PC-3 (cell line): ENCODE measurements at regions of chr4 and their contacts with region 1.

Region 1: GRCh38 chr4:186936496-186937375 is 213.1 kb upstream of the FAT1 start:
- DNase-seq: peak; percentile 79
- ATAC-seq: peak; percentile 66
- H3K4me3 ChIP-seq: peak overlapping the region; percentile 54
- H3K27ac ChIP-seq: peak overlapping the region; percentile 92
- H3K4me1 ChIP-seq: peaks cover 47% of the 10 kb centered on the region
- H3K27me3 ChIP-seq: no peaks in the 10 kb centered on the region
- CTCF ChIP-seq: peak; percentile 48; the same call in 1 of the 2 replicates

Region 2: GRCh38 chr4:186669159-186669731 is 267.5 kb before region 1 on chr4:
- CTCF ChIA-PET with region 1: no interaction called
- POLR2A ChIA-PET with region 1: no interaction called
- intact Hi-C with region 1: loop called (anchors 10 kb)
- DNase-seq: peak; percentile 59
- ATAC-seq: peak; percentile 64
- H3K4me3 ChIP-seq: no peak overlapping the region
- H3K27ac ChIP-seq: no peak overlapping the region
- H3K4me1 ChIP-seq: peaks cover 16% of the 10 kb centered on the region
- H3K27me3 ChIP-seq: no peaks in the 10 kb centered on the region
- CTCF ChIP-seq: peak; percentile 65

Region 3: DNA sequence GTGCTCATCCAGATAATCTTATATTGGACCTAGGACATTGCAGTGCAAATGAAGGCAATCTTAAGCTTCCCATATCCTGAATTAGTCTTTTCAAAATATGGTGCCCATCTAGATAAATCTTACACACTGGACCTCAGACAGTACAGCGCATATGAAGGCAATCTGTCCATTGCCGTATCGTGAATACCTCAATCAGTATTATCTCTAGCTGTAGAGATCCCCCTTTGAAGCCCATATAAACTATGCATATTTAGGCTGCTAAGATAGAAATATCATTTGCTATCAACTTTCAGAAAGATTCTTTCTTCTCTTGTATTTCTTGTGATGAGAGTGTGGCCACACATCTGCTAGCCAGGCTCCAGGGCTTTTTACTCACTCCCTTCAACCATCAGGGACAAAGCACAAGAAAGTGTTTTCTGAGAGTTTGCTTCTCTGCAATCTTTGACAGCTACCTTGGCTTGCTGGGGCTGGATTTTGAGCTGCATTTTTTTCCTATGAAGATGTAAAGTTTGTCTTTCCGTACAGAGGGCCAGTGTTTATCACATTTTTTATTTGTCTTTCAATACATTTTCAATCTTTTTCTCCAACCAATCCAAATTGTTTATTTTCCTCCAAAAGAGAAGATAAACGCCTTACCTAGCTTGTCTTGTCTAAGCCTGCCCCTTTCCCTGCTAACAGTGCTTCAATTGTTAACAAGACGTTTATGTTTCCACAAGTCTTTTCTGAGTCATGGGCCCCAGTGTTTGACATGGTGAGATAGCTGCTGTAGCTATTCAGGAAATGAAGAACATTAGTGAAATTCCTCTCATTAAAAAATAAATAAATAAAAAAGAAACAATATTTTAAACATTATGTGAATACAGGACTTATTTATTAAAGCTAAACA is 155.5 kb before region 1 on chr4:
- CTCF ChIA-PET with region 1: no interaction called
- POLR2A ChIA-PET with region 1: no interaction called
- intact Hi-C with region 1: loop called (anchors 5 kb)
- DNase-seq: peak; percentile 77
- ATAC-seq: peak; percentile 99
- H3K4me3 ChIP-seq: no peak overlapping the region
- H3K27ac ChIP-seq: peak overlapping the region; percentile 69
- H3K4me1 ChIP-seq: peaks cover 17% of the 10 kb centered on the region
- H3K27me3 ChIP-seq: no peaks in the 10 kb centered on the region
- CTCF ChIP-seq: no peak

Region 4: GRCh38 chr4:186789651-186790050 is 147.1 kb before region 1 on chr4:
- CTCF ChIA-PET with region 1: no interaction called
- POLR2A ChIA-PET with region 1: no interaction called
- intact Hi-C with region 1: loop called (anchors 1 kb)
- DNase-seq: no peak
- ATAC-seq: no peak
- H3K4me3 ChIP-seq: no peak overlapping the region
- H3K27ac ChIP-seq: no peak overlapping the region
- H3K4me1 ChIP-seq: peaks cover 7% of the 10 kb centered on the region
- H3K27me3 ChIP-seq: no peaks in the 10 kb centered on the region
- CTCF ChIP-seq: no peak

Region 5: GRCh38 chr4:186915816-186916215 is 20.9 kb before region 1 on chr4:
- CTCF ChIA-PET with region 1: no interaction called
- POLR2A ChIA-PET with region 1: no interaction called
- intact Hi-C with region 1: no loop called
- DNase-seq: no peak
- ATAC-seq: no peak
- H3K4me3 ChIP-seq: no peak overlapping the region
- H3K27ac ChIP-seq: no peak overlapping the region
- H3K4me1 ChIP-seq: 0 out of 2 replicates have a peak, but pooled peaks cover 3% of the 10 kb centered on the region
- H3K27me3 ChIP-seq: no peaks in the 10 kb centered on the region
- CTCF ChIP-seq: no peak

Region 6: DNA sequence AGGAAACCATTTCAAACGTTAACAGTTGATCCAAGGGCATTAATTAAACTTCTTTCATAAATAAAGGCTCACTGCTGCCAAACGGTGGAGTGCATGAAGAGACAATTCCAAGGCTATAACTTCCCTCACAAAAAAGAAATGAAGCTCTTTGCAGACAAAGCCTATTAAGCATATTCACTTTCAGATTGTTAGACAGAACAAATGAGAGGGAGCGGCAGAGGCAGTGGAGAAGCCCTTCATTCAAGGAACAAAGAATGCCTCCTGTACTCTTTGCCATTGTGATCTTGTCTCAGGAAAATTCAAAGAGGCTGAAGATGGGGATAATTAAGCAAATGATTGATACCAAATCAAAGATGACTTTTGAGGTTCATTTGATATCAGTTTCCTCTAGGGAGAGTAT is 157.4 kb after region 1 on chr4:
- CTCF ChIA-PET with region 1: no interaction called
- POLR2A ChIA-PET with region 1: no interaction called
- intact Hi-C with region 1: no loop called
- DNase-seq: no peak
- ATAC-seq: no peak
- H3K4me3 ChIP-seq: no peak overlapping the region
- H3K27ac ChIP-seq: no peak overlapping the region
- H3K4me1 ChIP-seq: no peaks in the 10 kb centered on the region
- H3K27me3 ChIP-seq: no peaks in the 10 kb centered on the region
- CTCF ChIP-seq: no peak